Activated naive CD4-positive, alpha-beta T cell treated with anti-CD3 and anti-CD28 coated beads for 36 hours (primary cell): ENCODE measurements at regions of chr9 and their contacts with region 1.

Region 1: DNA sequence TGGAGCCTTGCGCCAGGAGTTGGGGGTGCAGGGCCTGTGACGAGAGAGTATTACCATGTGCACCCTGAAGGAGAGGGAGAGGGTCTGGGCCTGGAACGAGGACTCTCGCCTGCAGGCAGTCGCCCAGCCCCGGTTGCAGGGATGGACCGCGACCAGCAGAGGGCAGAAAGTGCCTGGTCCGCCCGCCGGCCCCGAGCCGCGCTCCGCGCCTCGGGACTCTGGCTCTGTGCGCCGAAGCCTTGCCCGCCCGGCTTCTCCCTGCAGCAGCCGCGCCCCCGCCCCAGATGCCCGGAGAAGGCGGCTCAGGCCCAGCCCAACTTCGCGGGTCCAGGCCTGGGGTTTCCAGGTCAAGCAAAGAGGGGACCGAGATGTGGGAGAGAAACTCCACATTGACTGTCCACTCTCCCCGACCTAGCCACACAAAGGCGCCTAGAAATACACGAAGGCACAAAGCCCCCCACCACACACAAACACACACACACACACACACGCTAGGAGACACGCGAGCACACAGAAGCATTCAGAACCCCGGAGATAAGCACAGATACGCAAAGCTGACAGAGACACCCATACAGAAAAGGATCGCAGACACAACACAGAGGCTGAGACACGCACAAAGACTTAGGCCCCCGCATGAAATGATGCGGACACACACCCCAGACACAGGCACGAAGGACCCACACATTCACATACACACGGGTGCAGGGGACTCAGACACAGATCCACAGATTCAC is 2.0 kb upstream of the LMX1B start:
- DNase-seq: peak; percentile 81
- H3K4me3 Mint-ChIP-seq: peak overlapping the region; percentile 5
- H3K27ac Mint-ChIP-seq: no peak overlapping the region
- H3K4me1 Mint-ChIP-seq: peaks cover 22% of the 10 kb centered on the region
- H3K27me3 Mint-ChIP-seq: peaks cover 66% of the 10 kb centered on the region

Region 2: GRCh38 chr9:126626127-126626925 is 14.6 kb after region 1 on chr9:
- CTCF ChIA-PET with region 1: interaction called, 4 read pairs
- intact Hi-C with region 1: loop called (anchors 1 kb)
- DNase-seq: no peak
- H3K4me3 Mint-ChIP-seq: peak overlapping the region; percentile 39
- H3K27ac Mint-ChIP-seq: no peak overlapping the region
- H3K4me1 Mint-ChIP-seq: peaks cover 11% of the 10 kb centered on the region
- H3K27me3 Mint-ChIP-seq: peaks cover 75% of the 10 kb centered on the region

Region 3: GRCh38 chr9:126690431-126691350 is 78.9 kb after region 1 on chr9:
- CTCF ChIA-PET with region 1: interaction called, 8 read pairs
- intact Hi-C with region 1: loop called (anchors 1 kb)
- DNase-seq: peak; percentile 63
- H3K4me3 Mint-ChIP-seq: no peak overlapping the region
- H3K27ac Mint-ChIP-seq: no peak overlapping the region
- H3K4me1 Mint-ChIP-seq: no peaks in the 10 kb centered on the region
- H3K27me3 Mint-ChIP-seq: peaks cover 23% of the 10 kb centered on the region

Region 4: DNA sequence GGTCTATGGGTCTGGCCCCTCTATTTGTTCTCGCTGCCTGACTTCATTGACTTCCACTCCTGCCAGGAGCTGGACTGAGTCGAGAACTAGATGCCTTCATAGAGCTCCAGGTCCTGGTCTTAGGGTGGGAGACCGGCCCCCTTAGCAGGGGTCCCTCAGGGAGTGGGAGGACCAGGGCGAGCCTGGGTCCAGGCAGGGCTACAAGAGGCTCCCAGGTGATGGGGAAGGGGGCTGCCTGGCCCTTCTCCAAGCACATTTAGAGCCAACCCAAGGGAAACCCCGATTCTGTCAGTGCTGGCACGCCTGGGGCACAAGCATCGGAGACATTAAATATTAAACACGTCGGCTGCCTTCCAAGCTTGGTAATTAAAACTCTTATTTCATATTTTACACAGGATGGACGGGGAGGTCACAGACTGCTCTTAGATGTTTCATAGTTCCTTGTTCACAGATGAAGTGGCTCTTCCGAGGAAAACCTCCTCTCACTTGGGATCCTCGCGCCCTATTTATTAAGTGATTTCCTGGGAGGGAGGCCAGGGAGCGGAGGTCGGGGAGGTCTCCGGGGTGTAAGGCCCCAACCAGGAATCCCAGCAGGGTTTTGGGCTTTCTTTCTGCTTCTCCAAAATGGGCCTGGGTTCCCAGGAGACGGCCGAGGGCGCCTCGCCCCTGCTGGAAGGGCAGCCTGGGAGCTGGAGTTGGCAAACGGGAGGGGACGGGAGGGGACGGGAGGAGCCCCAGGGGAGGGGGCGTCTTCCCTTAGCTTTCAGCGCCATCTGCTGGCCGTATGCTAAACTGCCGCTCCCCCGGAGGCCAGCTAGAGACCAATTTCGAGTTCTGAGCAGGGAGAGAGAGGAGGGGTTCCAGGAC is 169.7 kb after region 1 on chr9:
- CTCF ChIA-PET with region 1: interaction called, 3 read pairs
- intact Hi-C with region 1: loop called (anchors 1 kb)
- DNase-seq: peak; percentile 87
- H3K4me3 Mint-ChIP-seq: no peak overlapping the region
- H3K27ac Mint-ChIP-seq: no peak overlapping the region
- H3K4me1 Mint-ChIP-seq: no peaks in the 10 kb centered on the region
- H3K27me3 Mint-ChIP-seq: peaks cover 13% of the 10 kb centered on the region